ENCODE measurements at regions of chr13 and their contacts with region 1.

Region 1: DNA sequence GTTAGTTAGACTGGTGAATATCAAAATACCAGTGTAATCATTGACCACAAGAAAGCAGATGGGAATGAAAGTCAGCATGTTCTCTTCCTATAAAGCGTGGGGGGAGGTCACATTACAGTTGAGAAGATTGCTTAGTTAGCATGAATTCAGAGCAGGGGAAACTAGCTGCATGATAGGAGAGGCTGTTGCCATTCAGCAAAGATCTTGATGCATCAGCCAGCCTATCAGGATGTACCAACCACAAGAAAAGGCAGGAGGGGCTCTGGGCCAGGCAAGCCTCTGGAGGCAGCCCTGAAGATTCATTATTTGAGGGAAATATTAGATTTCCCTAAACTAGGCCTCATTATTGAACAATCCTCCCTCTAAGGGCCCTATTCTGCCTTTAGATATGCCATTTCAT is 5.0 kb upstream of the MTMR6 start:
- H3K4me3 Mint-ChIP-seq: no peak overlapping the region
- H3K27ac Mint-ChIP-seq: peak overlapping the region; percentile 82
- H3K4me1 Mint-ChIP-seq: peaks cover 21% of the 10 kb centered on the region
- H3K27me3 Mint-ChIP-seq: peaks cover 10% of the 10 kb centered on the region

Region 2: DNA sequence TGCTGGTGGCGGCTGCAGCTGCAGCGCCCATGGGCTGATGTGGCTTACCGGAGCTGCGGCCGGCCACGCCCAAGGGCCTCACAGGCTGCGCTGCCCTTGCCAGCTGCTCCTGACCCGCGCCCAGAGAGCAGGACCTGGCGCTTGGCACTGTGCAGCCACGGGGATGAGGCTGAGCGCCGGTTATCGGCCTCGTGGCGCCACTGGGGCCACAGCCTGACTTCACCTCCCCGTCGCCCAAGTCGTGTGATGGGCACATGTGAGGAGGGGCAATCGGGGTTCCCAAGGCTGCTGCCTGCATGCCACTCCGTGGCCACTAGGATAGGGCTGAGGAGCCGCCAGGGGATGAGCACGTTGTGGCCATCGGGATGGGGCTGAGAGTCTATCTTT is 273.6 kb before region 1 on chr13:
- intact Hi-C with region 1: no loop called
- H3K4me3 Mint-ChIP-seq: no peak overlapping the region
- H3K27ac Mint-ChIP-seq: no peak overlapping the region
- H3K4me1 Mint-ChIP-seq: peaks cover 7% of the 10 kb centered on the region
- H3K27me3 Mint-ChIP-seq: peaks cover 68% of the 10 kb centered on the region

Region 3: GRCh38 chr13:25276748-25277147 is 15.6 kb before region 1 on chr13:
- intact Hi-C with region 1: loop called (anchors 1 kb)
- H3K4me3 Mint-ChIP-seq: no peak overlapping the region
- H3K27ac Mint-ChIP-seq: no peak overlapping the region
- H3K4me1 Mint-ChIP-seq: peaks cover 60% of the 10 kb centered on the region
- H3K27me3 Mint-ChIP-seq: no peaks in the 10 kb centered on the region

Region 4: GRCh38 chr13:25630329-25630900 is 338.1 kb after region 1 on chr13:
- intact Hi-C with region 1: no loop called
- H3K4me3 Mint-ChIP-seq: no peak overlapping the region
- H3K27ac Mint-ChIP-seq: no peak overlapping the region
- H3K4me1 Mint-ChIP-seq: no peaks in the 10 kb centered on the region
- H3K27me3 Mint-ChIP-seq: no peaks in the 10 kb centered on the region

Measured in dendritic cell treated with granulocyte-macrophage colony-stimulating factor and Interleukin-4, amounts not matched to agents 40 ng/mL and 50 ng/mL, for 4 days (primary cell).